ENCODE measurements at regions of chr3 and their contacts with region 1.

Region 1: DNA sequence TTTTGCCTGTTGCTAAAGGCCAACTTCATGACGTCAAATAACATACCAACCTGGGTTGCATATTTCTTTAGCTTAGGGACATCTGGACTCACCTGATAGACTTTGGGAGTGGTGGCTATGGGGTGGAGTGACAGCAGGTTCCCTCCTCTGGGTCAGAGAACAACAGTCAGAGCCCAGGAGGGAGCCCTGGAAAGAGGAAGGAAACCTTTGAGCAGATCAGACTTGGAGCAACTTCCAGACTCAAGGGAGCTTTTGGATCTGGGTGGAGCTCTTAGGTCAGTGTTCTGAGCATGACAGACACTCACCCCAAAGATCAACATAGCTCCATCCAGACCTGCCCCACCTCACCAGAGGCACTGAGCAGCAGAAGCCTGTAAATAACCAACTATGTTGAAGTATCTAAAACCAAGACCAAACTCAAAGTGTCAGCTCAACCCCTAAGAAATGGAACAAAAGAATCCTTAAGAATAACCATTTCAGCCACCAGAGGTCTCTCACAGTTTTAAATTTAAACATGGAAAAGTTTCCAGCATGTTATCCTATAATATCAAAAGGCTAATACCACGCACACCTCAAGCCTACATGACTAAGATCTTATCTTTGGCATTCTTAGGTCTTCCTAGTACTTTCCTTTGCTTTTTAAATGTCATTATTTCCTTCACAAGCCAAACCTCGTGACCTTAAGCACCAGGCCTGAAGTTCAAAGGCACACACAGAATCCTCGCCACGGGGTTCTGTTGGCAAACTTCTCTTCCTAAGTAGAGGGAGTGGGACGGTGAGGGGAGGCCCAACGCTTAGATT is 56.4 kb downstream of the UMPS start:
- DNase-seq: peak; percentile 57
- H3K4me3 ChIP-seq: no peak overlapping the region
- H3K27ac ChIP-seq: peak overlapping the region; percentile 21
- H3K4me1 ChIP-seq: peaks cover 17% of the 10 kb centered on the region
- H3K27me3 ChIP-seq: no peaks in the 10 kb centered on the region
- CTCF ChIP-seq: peak; percentile 59

Region 2: GRCh38 chr3:124772081-124772831 is 14.4 kb before region 1 on chr3:
- CTCF ChIA-PET with region 1: no interaction called
- POLR2A ChIA-PET with region 1: interaction called, 17 read pairs
- intact Hi-C with region 1: no loop called
- DNase-seq: peak; percentile 63
- H3K4me3 ChIP-seq: no peak overlapping the region
- H3K27ac ChIP-seq: peak overlapping the region; percentile 72
- H3K4me1 ChIP-seq: peaks cover 55% of the 10 kb centered on the region
- H3K27me3 ChIP-seq: no peaks in the 10 kb centered on the region
- CTCF ChIP-seq: no peak

Region 3: DNA sequence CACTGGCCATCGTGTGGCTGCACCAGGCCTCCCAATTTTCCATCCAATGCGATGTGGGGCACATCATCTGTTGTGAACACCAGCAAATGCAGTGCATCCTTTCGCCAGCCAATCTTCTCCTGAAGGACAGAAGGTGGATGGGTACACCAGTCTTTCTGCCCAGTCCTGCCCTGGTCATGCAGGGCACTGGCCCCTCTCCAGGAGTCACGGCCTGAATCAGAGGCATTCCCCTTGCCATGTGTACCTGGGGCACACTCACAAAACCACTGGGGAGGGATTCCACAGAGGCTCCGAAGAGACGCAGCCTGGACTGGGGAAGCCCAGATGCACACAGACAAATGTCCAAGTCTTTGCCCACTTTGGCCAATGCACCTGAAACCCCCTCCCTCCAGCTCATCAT is 34.7 kb after region 1 on chr3:
- CTCF ChIA-PET with region 1: no interaction called
- POLR2A ChIA-PET with region 1: no interaction called
- intact Hi-C with region 1: no loop called
- DNase-seq: no peak
- H3K4me3 ChIP-seq: no peak overlapping the region
- H3K27ac ChIP-seq: no peak overlapping the region
- H3K4me1 ChIP-seq: no peaks in the 10 kb centered on the region
- H3K27me3 ChIP-seq: no peaks in the 10 kb centered on the region
- CTCF ChIP-seq: no peak

Region 4: GRCh38 chr3:124905849-124906248 is 119.2 kb after region 1 on chr3:
- CTCF ChIA-PET with region 1: interaction called, 31 read pairs
- POLR2A ChIA-PET with region 1: no interaction called
- intact Hi-C with region 1: loop called (anchors 2 kb)
- DNase-seq: no peak
- H3K4me3 ChIP-seq: no peak overlapping the region
- H3K27ac ChIP-seq: no peak overlapping the region
- H3K4me1 ChIP-seq: no peaks in the 10 kb centered on the region
- H3K27me3 ChIP-seq: no peaks in the 10 kb centered on the region
- CTCF ChIP-seq: no peak